HepG2 (cell line): ENCODE measurements at regions of chrX and their contacts with region 1.

Region 1: GRCh38 chrX:117996918-117997480 is 119.6 kb downstream of the KLHL13 start:
- DNase-seq: peak; percentile 0
- ATAC-seq: no peak
- H3K4me3 ChIP-seq: no peak overlapping the region
- H3K27ac ChIP-seq: no peak overlapping the region
- H3K4me1 ChIP-seq: no peaks in the 10 kb centered on the region
- H3K27me3 ChIP-seq: no peaks in the 10 kb centered on the region
- CTCF ChIP-seq: peak; percentile 38; the same call in 1 of the 2 replicates
- EP300 ChIP-seq: no peak
- POLR2A ChIP-seq: no peak
- RAD21 ChIP-seq: no peak

Region 2: GRCh38 chrX:118226090-118226428 is 229.1 kb after region 1 on chrX:
- CTCF ChIA-PET with region 1: no interaction called
- POLR2A ChIA-PET with region 1: no interaction called
- in situ Hi-C with region 1: no loop called
- intact Hi-C with region 1: loop called (anchors 10 kb)
- DNase-seq: peak; percentile 1
- ATAC-seq: 0 out of 3 replicates have a peak, but pooled peaks have one; percentile 44
- H3K4me3 ChIP-seq: no peak overlapping the region
- H3K27ac ChIP-seq: no peak overlapping the region
- H3K4me1 ChIP-seq: no peaks in the 10 kb centered on the region
- H3K27me3 ChIP-seq: no peaks in the 10 kb centered on the region
- CTCF ChIP-seq: peak; percentile 38
- EP300 ChIP-seq: no peak
- POLR2A ChIP-seq: no peak
- RAD21 ChIP-seq: no peak